GM13977 (cell line): ENCODE measurements at regions of chr19 and their contacts with region 1.

Region 1: DNA sequence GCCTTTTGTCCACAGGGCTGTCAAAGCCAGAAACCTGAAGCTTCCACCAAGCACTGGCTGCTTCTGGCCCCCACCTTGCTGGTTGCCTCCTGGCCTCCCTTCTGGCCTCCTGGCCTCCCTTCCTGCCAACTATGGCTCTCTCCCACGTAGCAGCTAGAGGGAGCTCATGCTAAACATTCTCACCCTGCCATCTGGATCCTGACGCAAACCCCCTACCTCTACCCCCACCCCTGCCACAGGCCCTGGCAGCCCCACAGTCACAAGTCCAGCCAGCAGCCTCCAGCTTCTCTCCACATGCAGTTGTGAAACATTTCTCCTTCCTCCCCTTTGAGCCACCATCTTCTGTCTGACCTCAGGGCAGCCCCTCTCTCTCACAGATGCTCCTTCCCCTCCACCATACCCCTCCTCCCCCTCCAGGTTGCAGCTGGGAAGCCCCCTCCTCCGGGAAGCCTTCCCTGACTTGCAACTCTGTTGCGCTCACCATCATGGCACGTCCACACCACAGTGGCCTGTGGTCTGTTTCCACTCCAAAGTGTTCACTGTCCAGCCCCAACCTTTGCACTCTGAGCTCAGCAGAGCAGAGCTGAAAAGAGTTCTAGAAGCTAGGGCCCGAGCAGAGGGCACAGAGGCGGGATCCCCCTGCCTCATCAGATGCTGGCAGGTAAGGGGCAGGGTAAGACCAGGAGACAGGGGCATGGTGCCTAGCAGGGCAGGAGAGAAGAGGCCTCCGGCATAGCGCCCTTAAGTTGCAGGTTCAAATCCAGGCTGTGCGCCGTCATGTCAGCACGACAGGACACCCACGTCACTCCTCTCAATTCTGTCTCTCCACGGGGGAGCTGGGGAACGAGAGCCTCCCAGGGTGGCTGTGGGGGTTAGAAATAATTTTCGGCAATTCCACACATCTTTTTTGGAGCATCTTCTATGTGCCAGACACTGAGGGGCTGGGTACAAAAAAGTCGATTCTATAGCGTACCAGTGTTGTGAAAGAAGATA is 7.3 kb downstream of the ADGRL1 start:
- DNase-seq: no peak
- CTCF ChIP-seq: no peak

Region 2: DNA sequence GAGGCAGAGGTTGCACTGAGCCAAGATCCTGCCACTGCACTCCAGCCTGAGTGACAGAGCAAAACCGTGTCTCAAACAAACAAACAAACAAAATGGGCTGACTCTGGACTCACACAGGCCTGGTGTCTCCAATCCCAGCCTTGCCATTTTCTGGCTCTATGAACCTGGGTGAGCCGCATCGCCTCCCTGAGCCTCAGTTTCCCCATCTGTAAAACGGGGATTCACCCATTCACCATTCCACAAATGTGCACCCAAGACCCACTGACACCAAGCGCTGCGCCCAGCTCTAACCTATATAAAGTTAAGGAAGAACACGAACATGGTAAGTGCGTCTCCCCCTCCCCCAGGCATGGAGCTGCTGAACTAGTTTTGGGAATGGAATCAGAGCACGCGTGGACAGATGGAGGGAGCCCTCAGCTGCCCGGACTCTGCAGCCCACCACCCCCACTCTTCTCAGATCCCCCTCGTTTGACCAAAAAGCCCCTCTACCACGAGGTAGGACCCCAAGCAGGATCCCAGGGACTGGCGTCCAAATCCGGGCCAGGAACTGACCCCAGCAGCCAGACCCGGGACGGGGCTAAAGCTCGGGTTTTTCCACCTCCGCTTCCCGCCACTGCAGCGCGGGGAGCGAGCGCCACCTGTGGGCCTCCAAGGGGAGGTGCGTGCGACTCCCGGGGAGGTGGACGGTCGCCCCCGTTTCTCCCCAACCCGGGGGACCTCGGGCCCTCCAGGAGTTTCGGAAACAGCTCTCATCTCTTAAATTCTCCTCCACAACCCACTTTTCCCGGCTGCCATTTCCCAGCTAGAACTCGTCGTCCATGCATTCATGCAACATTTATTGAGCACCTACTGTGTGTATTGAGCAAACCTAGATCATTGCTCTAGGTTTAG is 149.6 kb after region 1 on chr19:
- in situ Hi-C with region 1: loop called (anchors 5 kb)
- DNase-seq: peak; percentile 81
- CTCF ChIP-seq: peak; percentile 96